ENCODE measurements at regions of chr7 and their contacts with region 1.

Region 1: DNA sequence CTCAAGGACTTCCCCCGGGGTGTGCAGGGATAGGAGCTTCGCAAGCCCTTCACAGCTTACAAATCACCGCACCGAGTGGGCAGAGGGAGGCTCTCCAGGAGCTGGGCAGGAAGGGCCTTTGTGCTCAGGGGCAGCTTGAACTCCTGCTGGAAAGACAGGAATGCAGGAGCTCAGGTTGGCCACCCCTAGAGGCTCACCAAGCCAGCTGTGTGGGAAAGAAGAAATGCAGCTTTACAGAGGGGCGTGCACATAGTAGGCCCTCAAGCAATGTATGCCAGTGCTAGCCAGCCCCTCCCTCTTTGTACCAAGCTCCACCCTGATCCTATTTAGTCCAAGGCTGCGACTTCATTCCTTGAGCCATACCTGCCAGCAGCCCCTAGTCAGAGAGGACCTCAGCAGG is 26.1 kb downstream of the STRA8 start:
- DNase-seq: no peak
- ATAC-seq: no peak
- H3K4me3 ChIP-seq: no peak overlapping the region
- H3K27ac ChIP-seq: no peak overlapping the region
- H3K4me1 ChIP-seq: no peaks in the 10 kb centered on the region
- H3K27me3 ChIP-seq: no peaks in the 10 kb centered on the region
- CTCF ChIP-seq: no peak

Region 2: GRCh38 chr7:136869001-136869961 is 1609.6 kb after region 1 on chr7:
- CTCF ChIA-PET with region 1: interaction called, 11 read pairs
- POLR2A ChIA-PET with region 1: no interaction called
- in situ Hi-C with region 1: no loop called
- intact Hi-C with region 1: no loop called
- DNase-seq: no peak
- ATAC-seq: peak; percentile 51
- H3K4me3 ChIP-seq: 0 out of 4 replicates have a peak overlapping the region, but pooled peaks of 1 of the 2 experiments have one; percentile 13
- H3K27ac ChIP-seq: no peak overlapping the region
- H3K4me1 ChIP-seq: no peaks in the 10 kb centered on the region
- H3K27me3 ChIP-seq: peaks cover 2% of the 10 kb centered on the region
- CTCF ChIP-seq: no peak